Colonic mucosa (tissue), 4 donors: ENCODE measurements at regions of chr10 and their contacts with region 1.

Region 1: GRCh38 chr10:73644015-73644743 is 2.9 kb upstream of the MYOZ1 start:
- DNase-seq: peak; percentile 59
- H3K4me3 ChIP-seq: no peak overlapping the region
- H3K27ac ChIP-seq: no peak overlapping the region
- H3K4me1 ChIP-seq: peaks cover 4% of the 10 kb centered on the region
- H3K27me3 ChIP-seq: no peaks in the 10 kb centered on the region
- CTCF ChIP-seq: peak; percentile 84

Region 2: GRCh38 chr10:73529089-73529832 is 114.9 kb before region 1 on chr10:
- intact Hi-C with region 1: loop called (anchors 1 kb)
- DNase-seq: peak; percentile 63
- H3K4me3 ChIP-seq: no peak overlapping the region
- H3K27ac ChIP-seq: no peak overlapping the region
- H3K4me1 ChIP-seq: no peaks in the 10 kb centered on the region
- H3K27me3 ChIP-seq: no peaks in the 10 kb centered on the region
- CTCF ChIP-seq: peak; percentile 84

Region 3: GRCh38 chr10:74202356-74202755 is 558.2 kb after region 1 on chr10:
- intact Hi-C with region 1: no loop called
- DNase-seq: no peak
- H3K4me3 ChIP-seq: no peak overlapping the region
- H3K27ac ChIP-seq: no peak overlapping the region
- H3K4me1 ChIP-seq: no peaks in the 10 kb centered on the region
- H3K27me3 ChIP-seq: no peaks in the 10 kb centered on the region
- CTCF ChIP-seq: no peak